ENCODE measurements at regions of chr2 and their contacts with region 1.

Region 1: DNA sequence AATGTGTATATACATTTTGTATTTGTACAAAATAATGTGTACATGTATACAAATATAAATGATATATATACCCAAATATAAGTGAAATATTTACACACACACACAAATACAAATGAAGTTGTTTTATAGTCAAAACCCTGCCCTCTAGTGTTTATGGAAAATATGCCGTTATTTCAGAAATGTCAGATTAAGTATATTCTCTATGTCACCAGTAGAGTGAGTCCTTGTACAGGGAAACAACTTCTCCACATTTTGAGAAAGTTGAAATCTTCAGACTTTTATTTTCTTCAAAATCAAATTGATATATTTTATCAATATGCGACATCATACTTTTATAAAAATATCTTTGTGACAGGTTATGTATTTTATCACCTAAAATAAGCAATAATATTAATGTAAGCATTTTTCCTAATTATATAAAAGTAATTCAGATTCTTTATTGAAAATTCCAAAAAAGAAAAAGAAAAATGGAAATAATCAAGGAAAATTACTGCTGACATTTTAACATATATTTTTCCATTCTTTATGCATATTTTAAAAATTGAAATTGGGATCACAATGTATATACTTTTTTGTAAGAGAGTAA is 22.4 kb downstream of the ARL6IP6 start:
- DNase-seq: peak; percentile 49 to 65 (median 58)
- ATAC-seq: peak; percentile 89
- H3K4me3 ChIP-seq: no peak overlapping the region
- H3K27ac ChIP-seq: no peak overlapping the region
- H3K4me1 ChIP-seq: no peaks in the 10 kb centered on the region
- H3K27me3 ChIP-seq: no peaks in the 10 kb centered on the region
- CTCF ChIP-seq: peak; percentile 62 to 99 (median 98)
- EP300 ChIP-seq: no peak
- POLR2A ChIP-seq: no peak
- RAD21 ChIP-seq: peak; percentile 78 to 79

Region 2: GRCh38 chr2:152036611-152037469 is 704.0 kb before region 1 on chr2:
- CTCF ChIA-PET with region 1: no interaction called
- POLR2A ChIA-PET with region 1: no interaction called
- in situ Hi-C with region 1: no loop called
- intact Hi-C with region 1: loop called (anchors 10 kb)
- DNase-seq: peak; percentile 58 to 84 (median 66)
- ATAC-seq: peak; percentile 93
- H3K4me3 ChIP-seq: no peak overlapping the region
- H3K27ac ChIP-seq: no peak overlapping the region
- H3K4me1 ChIP-seq: no peaks in the 10 kb centered on the region
- H3K27me3 ChIP-seq: peaks cover 13 to 41% of the 10 kb centered on the region in 2 experiments; a peak in 4 of 5 replicates
- CTCF ChIP-seq: peak; percentile 83 to 93 (median 86)
- EP300 ChIP-seq: no peak
- POLR2A ChIP-seq: no peak
- RAD21 ChIP-seq: peak; percentile 97

Region 3: DNA sequence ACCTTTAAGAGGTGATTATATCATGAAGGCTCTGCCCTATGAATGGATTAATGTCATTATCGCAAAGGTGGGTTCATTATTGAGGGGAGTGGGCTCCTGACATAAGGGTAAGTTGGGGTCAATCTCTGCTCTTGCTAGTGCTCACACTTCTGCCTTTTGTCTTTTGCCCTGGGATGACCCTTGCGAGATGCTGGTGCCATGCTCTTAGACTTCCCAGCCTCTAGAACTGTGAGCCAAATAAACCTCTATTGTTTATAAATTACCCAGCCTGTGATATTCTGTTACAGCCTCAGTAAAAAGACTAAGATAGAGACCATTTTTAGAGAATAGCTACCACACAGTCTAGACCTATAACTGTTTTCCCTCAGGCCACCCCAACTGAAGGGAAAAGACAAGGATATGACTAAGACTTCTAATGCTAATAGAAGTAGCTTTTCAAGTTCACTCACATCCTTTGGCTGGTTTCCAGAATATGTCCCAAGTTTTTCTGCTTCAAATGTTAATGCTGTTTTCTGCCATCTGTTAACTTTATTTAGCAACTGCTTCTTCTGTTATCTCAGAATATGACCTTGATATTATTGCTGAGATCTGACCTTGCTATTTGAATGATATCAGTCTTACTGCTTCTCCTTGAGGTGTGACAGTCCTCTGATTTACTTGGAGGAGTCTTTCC is 500.1 kb before region 1 on chr2:
- CTCF ChIA-PET with region 1: no interaction called
- POLR2A ChIA-PET with region 1: no interaction called
- in situ Hi-C with region 1: no loop called
- intact Hi-C with region 1: no loop called
- DNase-seq: no peak
- ATAC-seq: no peak
- H3K4me3 ChIP-seq: no peak overlapping the region
- H3K27ac ChIP-seq: no peak overlapping the region
- H3K4me1 ChIP-seq: no peaks in the 10 kb centered on the region
- H3K27me3 ChIP-seq: no peaks in the 10 kb centered on the region
- CTCF ChIP-seq: no peak
- EP300 ChIP-seq: no peak
- POLR2A ChIP-seq: no peak
- RAD21 ChIP-seq: no peak

Region 4: GRCh38 chr2:152537081-152537651 is 203.7 kb before region 1 on chr2:
- CTCF ChIA-PET with region 1: no interaction called
- POLR2A ChIA-PET with region 1: no interaction called
- in situ Hi-C with region 1: no loop called
- intact Hi-C with region 1: no loop called
- DNase-seq: no peak
- ATAC-seq: no peak
- H3K4me3 ChIP-seq: no peak overlapping the region
- H3K27ac ChIP-seq: no peak overlapping the region
- H3K4me1 ChIP-seq: no peaks in the 10 kb centered on the region
- H3K27me3 ChIP-seq: peaks cover 0 to 3% of the 10 kb centered on the region in 2 experiments; a peak in 2 of 5 replicates
- CTCF ChIP-seq: no peak
- EP300 ChIP-seq: no peak
- POLR2A ChIP-seq: no peak
- RAD21 ChIP-seq: no peak

Region 5: DNA sequence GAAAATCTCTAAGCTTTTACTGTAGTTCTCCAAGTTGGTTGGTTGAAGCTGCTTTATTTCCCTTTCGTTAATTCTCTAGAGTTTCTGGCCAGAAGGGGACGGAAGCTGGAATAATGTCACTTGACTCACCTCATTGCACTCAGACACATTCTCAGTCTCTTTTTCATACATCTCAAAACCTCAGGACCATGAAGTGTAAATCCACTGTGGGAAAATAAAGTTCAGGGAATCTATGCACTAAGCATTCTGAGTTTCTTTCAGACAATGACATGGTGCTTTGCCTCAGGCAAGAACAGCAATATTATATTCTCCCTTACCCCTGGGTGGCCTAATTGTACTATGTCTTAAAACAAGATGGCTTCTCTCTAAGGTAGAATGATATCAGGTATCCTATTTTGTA is 191.4 kb before region 1 on chr2:
- CTCF ChIA-PET with region 1: no interaction called
- POLR2A ChIA-PET with region 1: no interaction called
- in situ Hi-C with region 1: no loop called
- intact Hi-C with region 1: no loop called
- DNase-seq: no peak
- ATAC-seq: no peak
- H3K4me3 ChIP-seq: no peak overlapping the region
- H3K27ac ChIP-seq: no peak overlapping the region
- H3K4me1 ChIP-seq: no peaks in the 10 kb centered on the region
- H3K27me3 ChIP-seq: peaks cover 4 to 19% of the 10 kb centered on the region in 2 experiments; a peak in 4 of 5 replicates
- CTCF ChIP-seq: no peak
- EP300 ChIP-seq: no peak
- POLR2A ChIP-seq: no peak
- RAD21 ChIP-seq: no peak

Region 6: DNA sequence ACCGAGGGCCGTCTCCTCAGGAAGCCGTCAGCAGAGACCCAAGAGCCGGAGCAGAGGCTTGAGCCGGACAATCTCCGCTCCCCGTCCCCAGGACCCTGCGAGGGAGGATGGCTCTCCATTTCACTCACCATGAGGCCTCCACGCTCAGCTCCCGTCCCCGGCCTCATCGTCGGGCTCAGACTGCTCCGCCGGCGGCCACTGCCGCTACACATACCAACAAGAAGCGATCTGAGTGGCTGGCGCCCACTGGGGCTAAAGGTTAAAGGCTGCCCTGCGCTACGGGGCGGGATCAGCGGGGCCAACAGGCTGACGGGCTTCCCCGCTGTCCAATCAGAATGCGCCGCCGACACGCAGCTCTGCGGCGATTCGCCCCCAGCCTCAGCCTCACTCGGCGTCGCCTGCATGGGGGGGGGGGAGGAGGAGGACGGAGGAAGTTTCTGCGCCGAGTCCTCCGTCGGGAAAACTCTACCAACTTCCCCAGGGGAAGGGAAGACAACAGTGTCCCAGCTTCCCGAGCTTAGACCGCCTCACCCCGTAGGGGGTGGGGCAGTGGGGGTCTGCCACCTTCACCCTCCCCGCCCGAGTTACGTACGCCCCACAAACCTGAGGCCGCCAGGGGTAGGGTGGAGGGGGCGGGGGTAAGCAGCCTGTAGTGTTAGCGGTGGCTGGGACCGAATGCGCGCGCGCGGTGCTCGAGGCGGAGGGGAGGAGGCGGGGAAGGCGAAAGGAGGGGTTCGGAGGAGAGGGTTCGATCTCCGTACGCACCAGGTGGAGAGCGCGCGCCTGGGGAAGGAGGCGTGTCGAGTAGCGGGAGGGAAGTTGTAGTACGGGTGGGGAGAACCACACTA is 23.4 kb before region 1 on chr2 and contains the start of gene PRPF40A:
- CTCF ChIA-PET with region 1: interaction called, 5 read pairs
- POLR2A ChIA-PET with region 1: interaction called, 5 read pairs
- in situ Hi-C with region 1: no loop called
- intact Hi-C with region 1: loop called (anchors 2 kb)
- DNase-seq: peak; percentile 99 to 100 (median 100)
- ATAC-seq: peak; percentile 83
- H3K4me3 ChIP-seq: peak within 1 kb of the TSS; percentile 79
- H3K27ac ChIP-seq: peak within 1 kb of the TSS; percentile 98
- H3K4me1 ChIP-seq: peaks cover 3 to 16% of the 10 kb centered on the region in 2 experiments; a peak in 2 of 5 replicates
- H3K27me3 ChIP-seq: no peaks in the 10 kb centered on the region
- CTCF ChIP-seq: no peak
- EP300 ChIP-seq: no peak
- POLR2A ChIP-seq: peak; percentile 94
- RAD21 ChIP-seq: no peak
- polyA plus RNA-seq, gene PRPF40A: 168 to 190 TPM

Region 7: DNA sequence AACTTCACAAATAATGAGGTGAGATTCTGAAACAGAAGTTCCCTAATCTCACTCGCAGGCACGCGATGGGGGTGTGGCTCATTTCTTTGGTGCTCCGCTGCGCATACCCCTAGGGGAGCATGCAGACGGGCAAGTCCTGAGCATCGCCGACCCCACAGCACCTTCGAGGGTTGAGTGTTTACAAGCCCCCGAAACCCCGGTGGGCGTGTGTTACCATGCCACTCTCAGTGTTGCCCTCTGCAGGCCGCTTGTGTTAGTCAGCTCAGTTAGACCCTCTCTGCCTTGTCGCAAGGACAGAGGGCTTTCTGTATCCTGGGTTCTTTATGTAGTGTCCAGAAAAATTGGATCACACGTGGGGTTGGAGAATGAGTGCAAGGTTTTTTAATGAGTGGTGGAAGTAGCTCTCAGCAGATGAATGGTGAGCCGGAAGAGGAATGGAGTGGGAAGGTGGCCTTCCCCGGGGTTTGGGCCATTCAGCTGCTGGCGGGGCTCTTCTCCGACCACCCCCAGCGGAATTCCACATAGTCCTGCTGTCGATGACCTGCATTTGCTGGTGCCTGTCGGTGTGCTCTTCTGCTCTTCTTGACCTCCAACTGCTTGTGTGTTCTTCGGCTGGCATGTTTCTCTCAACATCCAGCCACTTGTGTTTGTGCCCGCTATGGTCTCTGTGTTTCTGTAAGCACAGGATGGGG is 546.4 kb after region 1 on chr2:
- CTCF ChIA-PET with region 1: no interaction called
- POLR2A ChIA-PET with region 1: no interaction called
- in situ Hi-C with region 1: no loop called
- intact Hi-C with region 1: loop called (anchors 5 kb)
- DNase-seq: peak in 2 of 4 experiments; percentile 7 to 24
- ATAC-seq: peak; percentile 42; the same call in 1 of the 3 replicates
- H3K4me3 ChIP-seq: no peak overlapping the region; the same call in 1 of the 2 replicates
- H3K27ac ChIP-seq: no peak overlapping the region
- H3K4me1 ChIP-seq: no peaks in the 10 kb centered on the region; a peak in 1 of 5 replicates
- H3K27me3 ChIP-seq: no peaks in the 10 kb centered on the region
- CTCF ChIP-seq: peak; percentile 3 to 30 (median 15); a peak in 1 of 6 replicates
- EP300 ChIP-seq: no peak
- POLR2A ChIP-seq: no peak
- RAD21 ChIP-seq: no peak